ENCODE measurements at regions of chr5 and their contacts with region 1.

Region 1: GRCh38 chr5:140174465-140175366 is at the start of gene CYSTM1:
- DNase-seq: peak; percentile 86 to 98
- H3K4me3 ChIP-seq: peak within 1 kb of the TSS; percentile 93
- H3K27ac ChIP-seq: peak within 1 kb of the TSS; percentile 96 to 98
- H3K4me1 ChIP-seq: peaks cover 4 to 28% of the 10 kb centered on the region in 2 donors
- H3K27me3 ChIP-seq: no peaks in the 10 kb centered on the region
- CTCF ChIP-seq: peak in 1 of 3 experiments; percentile 3
- total RNA-seq, gene CYSTM1: 66.3 TPM

Region 2: DNA sequence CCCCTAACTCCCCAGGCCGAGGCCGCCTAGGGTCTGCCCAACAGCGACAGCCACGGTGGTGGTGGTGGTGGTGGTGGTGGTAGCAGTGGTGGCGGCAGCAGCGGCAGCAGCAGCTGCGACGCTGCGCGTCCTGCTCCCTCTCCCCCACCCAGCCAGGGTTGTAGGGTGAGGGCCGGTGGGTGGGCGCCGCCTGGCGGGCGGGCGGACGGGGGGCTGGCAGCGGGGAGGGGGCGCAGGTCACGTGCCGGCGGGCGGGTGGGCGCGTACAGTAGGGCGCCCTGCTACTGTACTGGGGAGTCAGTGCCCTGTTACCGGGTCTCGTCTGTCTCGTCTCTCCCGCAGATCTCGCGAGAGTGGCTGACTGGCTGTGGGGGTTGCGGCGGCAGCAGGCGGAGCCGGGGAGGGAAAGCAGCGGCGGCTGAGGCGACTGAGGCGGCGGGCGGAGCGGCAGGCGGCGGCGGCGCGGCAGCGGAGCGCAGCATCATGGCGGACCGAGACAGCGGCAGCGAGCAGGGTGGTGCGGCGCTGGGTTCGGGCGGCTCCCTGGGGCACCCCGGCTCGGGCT is 60.9 kb before region 1 on chr5 and contains the start of gene PURA:
- intact Hi-C with region 1: loop called (anchors 2 kb)
- DNase-seq: peak; percentile 87 to 97
- H3K4me3 ChIP-seq: peak within 1 kb of the TSS; percentile 70 to 77
- H3K27ac ChIP-seq: peak within 1 kb of the TSS; percentile 83 to 89
- H3K4me1 ChIP-seq: peaks cover 14 to 31% of the 10 kb centered on the region in 2 donors
- H3K27me3 ChIP-seq: no peaks in the 10 kb centered on the region
- CTCF ChIP-seq: no peak
- total RNA-seq, gene PURA: 11.5 TPM

Region 3: GRCh38 chr5:140148508-140148907 is 26.2 kb before region 1 on chr5:
- intact Hi-C with region 1: no loop called
- DNase-seq: peak in 1 of 2 donors; percentile 61
- H3K4me3 ChIP-seq: no peak overlapping the region
- H3K27ac ChIP-seq: no peak overlapping the region
- H3K4me1 ChIP-seq: peaks cover 11 to 15% of the 10 kb centered on the region in 2 donors
- H3K27me3 ChIP-seq: no peaks in the 10 kb centered on the region
- CTCF ChIP-seq: no peak

Region 4: DNA sequence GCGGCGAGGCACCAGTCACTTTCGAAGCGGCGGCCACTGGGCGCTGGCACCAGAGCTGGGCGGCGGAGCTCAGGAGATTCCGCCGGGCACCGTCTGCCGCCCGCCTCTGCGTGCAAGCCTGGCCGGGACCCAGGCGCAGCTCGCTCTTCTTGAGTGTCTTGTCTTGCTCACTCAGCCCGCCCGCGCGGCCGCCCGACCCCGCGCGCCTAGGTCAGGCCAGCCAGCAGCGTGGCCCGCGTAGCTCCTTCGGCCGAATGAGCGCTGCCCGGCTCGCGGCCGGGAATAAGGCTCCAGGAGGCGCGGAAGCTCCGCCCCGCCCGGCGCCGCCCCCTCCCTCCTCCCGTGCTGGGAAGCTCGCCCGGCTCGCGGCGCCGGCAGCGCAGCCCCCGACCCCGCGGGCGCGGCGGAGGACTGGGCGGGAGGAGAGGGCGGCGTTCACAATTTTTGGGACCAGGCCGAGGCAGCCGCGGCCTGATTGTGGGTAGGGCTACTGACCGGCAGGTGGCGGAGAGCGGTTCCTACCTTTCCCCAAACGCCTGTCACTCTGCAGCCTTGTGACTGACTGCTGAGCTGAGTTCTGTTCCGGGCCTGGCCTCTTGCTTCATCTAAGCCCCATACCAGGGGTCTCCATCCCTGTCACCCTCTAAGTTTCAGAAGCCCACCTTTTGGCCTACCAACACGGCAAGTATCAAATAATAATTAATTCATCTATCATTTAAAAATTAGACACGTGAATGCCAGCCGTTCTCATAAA is 171.8 kb after region 1 on chr5 and contains the start of gene HBEGF:
- intact Hi-C with region 1: loop called (anchors 5 kb)
- DNase-seq: peak; percentile 27 to 90
- H3K4me3 ChIP-seq: peak within 1 kb of the TSS; percentile 69 to 93
- H3K27ac ChIP-seq: peak within 1 kb of the TSS; percentile 75 to 80
- H3K4me1 ChIP-seq: peaks cover 0 to 22% of the 10 kb centered on the region in 2 donors
- H3K27me3 ChIP-seq: no peaks in the 10 kb centered on the region
- CTCF ChIP-seq: peak; percentile 31 to 55 (median 50)
- total RNA-seq, gene HBEGF: 3.0 TPM

Region 5: DNA sequence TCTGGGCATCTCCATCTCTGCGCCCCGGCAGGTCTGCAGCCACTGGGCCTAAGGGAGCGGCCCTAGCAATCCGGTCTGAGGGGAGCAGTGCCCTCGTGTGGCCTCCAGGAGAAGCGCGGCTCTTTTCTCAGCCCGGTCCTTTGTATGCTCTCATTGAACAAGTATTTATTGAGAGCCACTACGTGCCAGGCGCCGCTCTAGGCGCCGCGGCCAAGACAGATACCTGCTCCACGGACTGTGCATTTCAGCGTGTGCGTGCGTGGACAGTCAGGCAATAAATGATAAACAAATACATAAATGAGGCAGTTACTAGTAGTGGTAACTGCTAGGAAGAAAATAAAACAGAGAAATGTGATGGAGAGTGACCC is 183.0 kb after region 1 on chr5:
- intact Hi-C with region 1: loop called (anchors 5 kb)
- DNase-seq: peak; percentile 56 to 94
- H3K4me3 ChIP-seq: peak overlapping the region; percentile 35 to 40
- H3K27ac ChIP-seq: no peak overlapping the region
- H3K4me1 ChIP-seq: peaks cover 0 to 4% of the 10 kb centered on the region in 2 donors
- H3K27me3 ChIP-seq: no peaks in the 10 kb centered on the region
- CTCF ChIP-seq: peak; percentile 86 to 93 (median 91)

Region 6: DNA sequence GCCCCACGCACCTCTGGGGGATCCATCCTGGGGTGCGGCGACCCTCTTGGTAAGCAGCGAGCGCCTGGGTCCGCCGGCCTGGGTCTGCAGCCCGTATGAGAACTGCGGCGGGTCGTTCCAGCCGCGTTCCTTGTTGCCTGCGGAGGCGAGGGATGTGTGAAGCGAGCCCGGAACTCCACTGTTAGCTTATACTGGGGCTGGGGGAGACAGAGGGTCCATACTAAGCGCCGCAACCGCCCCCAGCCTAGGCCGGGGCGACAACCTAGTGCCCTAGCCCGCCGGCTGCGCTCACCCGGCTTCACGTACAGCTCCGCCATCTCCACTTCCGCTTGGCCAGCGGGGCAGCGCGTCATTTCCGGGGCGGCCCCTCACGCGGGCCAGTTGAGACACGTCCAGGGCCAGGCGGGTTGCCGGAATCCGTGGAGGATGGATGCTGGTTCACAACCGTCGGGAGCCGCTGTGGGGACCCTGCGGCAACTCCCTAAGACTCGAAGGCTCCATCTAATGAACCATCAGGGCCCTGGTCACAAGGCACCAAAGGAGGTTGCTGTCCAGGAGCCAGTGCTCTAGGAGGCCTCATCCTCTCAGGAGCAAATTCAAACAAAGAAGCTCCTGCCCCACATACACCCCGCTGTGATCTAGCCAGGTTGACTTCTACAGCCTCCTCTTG is 382.6 kb after region 1 on chr5 and contains the start of gene SRA1:
- intact Hi-C with region 1: loop called (anchors 5 kb)
- DNase-seq: peak; percentile 79 to 97
- H3K4me3 ChIP-seq: peak within 1 kb of the TSS; percentile 68 to 74
- H3K27ac ChIP-seq: peak within 1 kb of the TSS; percentile 82 to 88
- H3K4me1 ChIP-seq: peaks cover 0 to 18% of the 10 kb centered on the region in 2 donors
- H3K27me3 ChIP-seq: no peaks in the 10 kb centered on the region
- CTCF ChIP-seq: no peak
- total RNA-seq, gene SRA1: 47.3 TPM